H1 (cell line): ENCODE measurements at regions of chr19 and their contacts with region 1.

Region 1: GRCh38 chr19:31560086-31561060 is 211.1 kb upstream of the TSHZ3 start:
- DNase-seq: no peak
- H3K4me3 ChIP-seq: no peak overlapping the region
- H3K27ac ChIP-seq: no peak overlapping the region
- H3K4me1 ChIP-seq: no peaks in the 10 kb centered on the region; a peak in 1 of 7 replicates
- H3K27me3 ChIP-seq: no peaks in the 10 kb centered on the region
- CTCF ChIP-seq: no peak
- EP300 ChIP-seq: no peak
- POLR2A ChIP-seq: no peak
- RAD21 ChIP-seq: no peak

Region 2: DNA sequence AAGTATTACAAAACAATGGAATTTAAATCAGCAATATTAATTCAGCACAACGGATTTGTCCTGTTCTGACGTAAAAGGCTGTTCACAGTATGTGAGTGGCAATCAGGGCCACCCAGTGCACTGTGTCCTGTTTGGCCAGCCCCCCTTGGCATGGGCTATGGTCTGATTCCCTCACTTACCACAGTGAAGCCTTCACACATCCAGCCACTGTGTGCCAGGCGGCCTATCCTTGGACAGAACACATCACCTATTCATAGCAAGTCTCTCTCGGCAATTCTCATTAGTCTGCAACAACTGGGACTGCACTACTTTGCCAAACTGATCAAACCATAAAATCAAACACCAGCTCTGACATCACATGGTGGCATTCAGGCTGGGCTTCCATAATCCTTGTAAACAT is 10.3 kb after region 1 on chr19:
- CTCF ChIA-PET with region 1: interaction called, 22 read pairs
- POLR2A ChIA-PET with region 1: no interaction called
- DNase-seq: no peak
- H3K4me3 ChIP-seq: no peak overlapping the region
- H3K27ac ChIP-seq: no peak overlapping the region
- H3K4me1 ChIP-seq: peaks cover 0 to 8% (median 2%) of the 10 kb centered on the region in 4 experiments; a peak in 2 of 7 replicates
- H3K27me3 ChIP-seq: no peaks in the 10 kb centered on the region
- CTCF ChIP-seq: no peak
- EP300 ChIP-seq: no peak
- POLR2A ChIP-seq: no peak
- RAD21 ChIP-seq: no peak

Region 3: DNA sequence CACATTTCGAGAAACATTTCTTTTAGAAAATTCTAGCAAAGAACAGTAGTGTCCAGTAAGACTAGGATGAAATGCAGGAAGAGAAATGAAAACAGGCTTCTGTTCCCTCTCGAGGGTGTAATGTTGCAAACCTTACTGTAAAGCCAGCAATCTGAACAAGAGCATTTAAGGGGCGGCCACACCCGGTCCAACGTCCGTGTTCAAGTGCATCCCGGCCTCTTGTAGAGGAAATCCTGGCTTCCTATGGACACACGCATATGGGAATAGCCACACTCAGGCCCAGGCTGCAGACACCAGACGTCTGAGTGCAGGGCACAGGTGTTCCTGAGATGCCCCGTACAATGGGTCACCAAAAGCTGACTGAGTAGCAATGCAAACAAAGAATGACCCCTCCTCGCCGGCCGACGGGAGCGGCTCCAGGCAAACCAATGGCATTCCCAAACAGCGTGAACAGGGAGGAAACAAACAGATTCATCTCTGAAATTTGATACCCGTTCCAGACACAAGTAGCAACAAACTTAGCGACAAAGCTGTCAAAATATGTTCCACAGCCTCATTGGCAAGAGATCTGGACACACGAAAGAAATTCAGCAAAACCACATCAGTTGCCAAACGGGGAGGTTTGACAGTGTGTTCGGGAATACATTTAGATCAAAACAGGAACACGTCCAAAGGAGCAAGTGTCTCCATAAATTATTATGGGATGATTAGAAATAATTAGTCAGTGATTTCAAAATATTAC is 67.4 kb after region 1 on chr19:
- CTCF ChIA-PET with region 1: no interaction called
- POLR2A ChIA-PET with region 1: no interaction called
- DNase-seq: no peak
- H3K4me3 ChIP-seq: no peak overlapping the region
- H3K27ac ChIP-seq: no peak overlapping the region
- H3K4me1 ChIP-seq: no peaks in the 10 kb centered on the region; a peak in 3 of 7 replicates
- H3K27me3 ChIP-seq: no peaks in the 10 kb centered on the region
- CTCF ChIP-seq: no peak
- EP300 ChIP-seq: no peak
- POLR2A ChIP-seq: no peak
- RAD21 ChIP-seq: no peak